ENCODE measurements at regions of chr4 and their contacts with region 1.

Region 1: GRCh38 chr4:23135792-23136645 is 443.3 kb downstream of the GBA3 start:
- DNase-seq: no peak
- ATAC-seq: peak; percentile 79
- H3K4me3 ChIP-seq: no peak overlapping the region
- H3K27ac ChIP-seq: no peak overlapping the region
- H3K4me1 ChIP-seq: no peaks in the 10 kb centered on the region
- H3K27me3 ChIP-seq: no peaks in the 10 kb centered on the region; a peak in 1 of 4 replicates
- CTCF ChIP-seq: peak; percentile 64 to 80 (median 65)
- EP300 ChIP-seq: no peak
- POLR2A ChIP-seq: no peak
- RAD21 ChIP-seq: peak; percentile 68

Region 2: GRCh38 chr4:23105759-23106370 is 30.2 kb before region 1 on chr4:
- CTCF ChIA-PET with region 1: interaction called, 13 read pairs
- POLR2A ChIA-PET with region 1: no interaction called
- RAD21 ChIA-PET with region 1: interaction called, 4 read pairs
- SMC1A ChIA-PET with region 1: interaction called, 3 read pairs
- in situ Hi-C with region 1: no loop called
- intact Hi-C with region 1: no loop called
- DNase-seq: no peak
- ATAC-seq: no peak
- H3K4me3 ChIP-seq: no peak overlapping the region
- H3K27ac ChIP-seq: no peak overlapping the region
- H3K4me1 ChIP-seq: no peaks in the 10 kb centered on the region
- H3K27me3 ChIP-seq: no peaks in the 10 kb centered on the region
- CTCF ChIP-seq: no peak
- EP300 ChIP-seq: no peak
- POLR2A ChIP-seq: no peak
- RAD21 ChIP-seq: no peak

Region 3: DNA sequence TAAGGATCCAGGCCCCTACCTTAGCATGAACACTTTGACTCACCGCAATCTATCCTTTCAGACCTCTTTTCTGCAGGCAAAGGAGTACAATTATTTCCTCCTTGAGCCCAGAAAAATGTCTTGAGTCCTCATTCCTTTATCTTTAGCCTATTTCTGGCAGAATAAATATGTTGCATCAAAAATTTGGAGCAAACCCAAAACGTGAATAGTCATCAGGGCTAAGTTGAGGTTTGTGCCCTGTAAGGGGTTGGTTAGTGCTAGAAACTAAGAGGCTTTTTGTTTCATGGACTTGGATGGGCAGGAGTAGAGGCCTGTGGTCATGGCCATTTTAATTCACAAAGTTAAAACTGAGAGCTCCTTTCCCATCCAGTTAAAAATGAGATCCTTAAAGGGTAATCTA is 17.1 kb after region 1 on chr4:
- CTCF ChIA-PET with region 1: interaction called, 18 read pairs
- POLR2A ChIA-PET with region 1: no interaction called
- RAD21 ChIA-PET with region 1: interaction called, 6 read pairs
- SMC1A ChIA-PET with region 1: interaction called, 13 read pairs
- in situ Hi-C with region 1: no loop called
- intact Hi-C with region 1: no loop called
- DNase-seq: no peak
- ATAC-seq: no peak
- H3K4me3 ChIP-seq: no peak overlapping the region
- H3K27ac ChIP-seq: no peak overlapping the region
- H3K4me1 ChIP-seq: no peaks in the 10 kb centered on the region
- H3K27me3 ChIP-seq: no peaks in the 10 kb centered on the region
- CTCF ChIP-seq: no peak
- EP300 ChIP-seq: no peak
- POLR2A ChIP-seq: no peak
- RAD21 ChIP-seq: no peak

Region 4: GRCh38 chr4:23333946-23334878 is 198.2 kb after region 1 on chr4:
- CTCF ChIA-PET with region 1: interaction called, 5 read pairs
- POLR2A ChIA-PET with region 1: no interaction called
- RAD21 ChIA-PET with region 1: interaction called, 5 read pairs
- SMC1A ChIA-PET with region 1: interaction called, 5 read pairs
- in situ Hi-C with region 1: no loop called
- intact Hi-C with region 1: loop called (anchors 5 kb)
- DNase-seq: peak; percentile 39
- ATAC-seq: peak; percentile 91
- H3K4me3 ChIP-seq: no peak overlapping the region
- H3K27ac ChIP-seq: peak overlapping the region; percentile 22; the same call in 1 of the 2 replicates
- H3K4me1 ChIP-seq: no peaks in the 10 kb centered on the region
- H3K27me3 ChIP-seq: no peaks in the 10 kb centered on the region
- CTCF ChIP-seq: peak in 2 of 3 experiments; percentile 15 to 42; a peak in 1 of 6 replicates
- EP300 ChIP-seq: peak; percentile 98
- POLR2A ChIP-seq: no peak
- RAD21 ChIP-seq: peak; percentile 64

Region 5: GRCh38 chr4:23441530-23442069 is 305.6 kb after region 1 on chr4:
- CTCF ChIA-PET with region 1: no interaction called
- POLR2A ChIA-PET with region 1: no interaction called
- RAD21 ChIA-PET with region 1: no interaction called
- SMC1A ChIA-PET with region 1: no interaction called
- in situ Hi-C with region 1: no loop called
- intact Hi-C with region 1: no loop called
- DNase-seq: no peak
- ATAC-seq: no peak
- H3K4me3 ChIP-seq: no peak overlapping the region
- H3K27ac ChIP-seq: no peak overlapping the region
- H3K4me1 ChIP-seq: no peaks in the 10 kb centered on the region
- H3K27me3 ChIP-seq: no peaks in the 10 kb centered on the region
- CTCF ChIP-seq: no peak
- EP300 ChIP-seq: no peak
- POLR2A ChIP-seq: no peak
- RAD21 ChIP-seq: no peak

Region 6: DNA sequence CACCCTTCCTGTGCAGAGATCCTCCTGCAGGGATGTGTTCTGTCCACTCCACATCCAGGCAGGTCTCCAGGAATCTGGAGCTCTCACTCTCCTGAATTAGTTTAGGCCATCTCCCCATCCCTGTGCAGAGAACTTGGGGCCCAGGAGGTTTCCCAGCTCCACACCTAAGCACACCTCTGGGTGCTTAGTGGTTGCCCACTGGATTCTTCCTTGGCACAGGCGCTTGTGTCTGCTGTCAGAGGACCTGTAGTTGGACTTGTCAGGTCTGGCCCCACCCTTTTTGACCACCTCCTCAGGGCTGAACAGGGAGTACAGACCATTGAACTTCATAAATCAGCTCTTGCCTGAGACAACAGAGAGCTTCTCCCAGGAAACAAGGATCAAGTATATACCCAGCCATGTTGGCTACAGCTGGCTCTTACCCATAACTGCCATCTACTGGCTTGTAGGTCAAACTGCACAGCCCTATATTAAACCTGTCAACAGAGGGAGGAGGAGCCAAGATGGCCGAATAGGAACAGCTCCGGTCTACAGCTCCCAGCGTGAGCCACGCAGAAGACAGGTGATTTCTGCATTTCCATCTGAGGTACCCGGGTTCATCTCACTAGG is 478.4 kb after region 1 on chr4:
- CTCF ChIA-PET with region 1: interaction called, 13 read pairs
- POLR2A ChIA-PET with region 1: no interaction called
- RAD21 ChIA-PET with region 1: interaction called, 19 read pairs
- SMC1A ChIA-PET with region 1: interaction called, 10 read pairs
- in situ Hi-C with region 1: no loop called
- intact Hi-C with region 1: loop called (anchors 10 kb)
- DNase-seq: no peak
- ATAC-seq: peak; percentile 91
- H3K4me3 ChIP-seq: no peak overlapping the region
- H3K27ac ChIP-seq: no peak overlapping the region
- H3K4me1 ChIP-seq: no peaks in the 10 kb centered on the region
- H3K27me3 ChIP-seq: no peaks in the 10 kb centered on the region
- CTCF ChIP-seq: no peak; a peak in 1 of 6 replicates
- EP300 ChIP-seq: no peak
- POLR2A ChIP-seq: no peak
- RAD21 ChIP-seq: peak; percentile 47

Region 7: GRCh38 chr4:23999714-24000469 is 863.9 kb after region 1 on chr4:
- CTCF ChIA-PET with region 1: no interaction called
- POLR2A ChIA-PET with region 1: no interaction called
- RAD21 ChIA-PET with region 1: no interaction called
- SMC1A ChIA-PET with region 1: no interaction called
- in situ Hi-C with region 1: no loop called
- intact Hi-C with region 1: no loop called
- DNase-seq: no peak
- ATAC-seq: no peak
- H3K4me3 ChIP-seq: no peak overlapping the region
- H3K27ac ChIP-seq: no peak overlapping the region
- H3K4me1 ChIP-seq: no peaks in the 10 kb centered on the region
- H3K27me3 ChIP-seq: no peaks in the 10 kb centered on the region
- CTCF ChIP-seq: no peak
- EP300 ChIP-seq: no peak
- POLR2A ChIP-seq: no peak
- RAD21 ChIP-seq: no peak

Region 8: DNA sequence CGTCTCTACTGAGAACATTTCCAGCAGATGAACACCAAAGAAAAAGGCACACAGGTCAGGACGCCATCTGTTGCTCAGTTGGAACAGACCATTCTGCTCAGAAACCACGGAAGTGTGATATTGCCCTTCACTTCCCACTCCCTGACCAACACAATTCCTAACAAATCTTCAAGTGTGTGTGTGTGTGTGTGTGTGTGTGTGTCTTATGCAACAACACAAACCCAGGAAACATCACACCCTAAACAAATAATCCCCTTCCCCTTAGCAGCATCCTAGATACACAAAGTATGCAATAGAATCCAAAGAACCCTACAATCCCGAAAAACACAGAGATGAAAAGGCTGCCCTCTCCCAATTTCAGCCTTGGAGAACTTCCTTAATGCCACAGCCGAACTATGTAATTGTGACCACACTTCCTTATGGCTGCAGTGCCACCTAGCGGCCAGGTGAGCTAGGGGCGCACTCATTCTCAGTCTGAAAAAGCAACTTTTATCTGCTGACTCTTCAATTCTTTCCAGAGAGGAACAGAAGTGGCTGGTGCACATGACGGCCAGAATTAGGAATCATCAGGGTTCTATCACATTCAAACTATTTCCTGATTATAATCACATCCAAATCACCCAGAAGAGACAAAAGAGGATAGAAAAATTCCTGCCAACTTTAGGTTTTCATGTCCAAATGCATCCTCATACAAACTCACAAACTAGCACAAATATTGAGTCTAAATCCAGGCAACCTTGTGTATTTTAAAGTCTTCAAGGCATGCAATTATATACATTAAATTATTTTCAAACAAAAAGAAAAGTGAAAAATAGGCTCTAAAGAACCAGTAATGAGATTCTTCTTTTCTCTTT is 1283.4 kb after region 1 on chr4:
- CTCF ChIA-PET with region 1: interaction called, 19 read pairs
- POLR2A ChIA-PET with region 1: no interaction called
- RAD21 ChIA-PET with region 1: interaction called, 6 read pairs
- SMC1A ChIA-PET with region 1: interaction called, 4 read pairs
- in situ Hi-C with region 1: loop called (anchors 5 kb)
- intact Hi-C with region 1: loop called (anchors 5 kb)
- DNase-seq: peak; percentile 12
- ATAC-seq: peak; percentile 93
- H3K4me3 ChIP-seq: no peak overlapping the region
- H3K27ac ChIP-seq: no peak overlapping the region
- H3K4me1 ChIP-seq: no peaks in the 10 kb centered on the region
- H3K27me3 ChIP-seq: no peaks in the 10 kb centered on the region; a peak in 1 of 4 replicates
- CTCF ChIP-seq: peak; percentile 90 to 98 (median 92)
- EP300 ChIP-seq: no peak
- POLR2A ChIP-seq: no peak
- RAD21 ChIP-seq: peak; percentile 95